ENCODE measurements at regions of chr3 and their contacts with region 1.

Region 1: GRCh38 chr3:111781561-111782446 is 77.3 kb upstream of the PHLDB2 start:
- DNase-seq: no peak
- H3K4me3 ChIP-seq: no peak overlapping the region
- H3K27ac ChIP-seq: peak overlapping the region; percentile 68 to 75
- H3K4me1 ChIP-seq: peaks cover 0 to 32% of the 10 kb centered on the region in 2 donors
- H3K27me3 ChIP-seq: no peaks in the 10 kb centered on the region
- CTCF ChIP-seq: no peak

Region 2: DNA sequence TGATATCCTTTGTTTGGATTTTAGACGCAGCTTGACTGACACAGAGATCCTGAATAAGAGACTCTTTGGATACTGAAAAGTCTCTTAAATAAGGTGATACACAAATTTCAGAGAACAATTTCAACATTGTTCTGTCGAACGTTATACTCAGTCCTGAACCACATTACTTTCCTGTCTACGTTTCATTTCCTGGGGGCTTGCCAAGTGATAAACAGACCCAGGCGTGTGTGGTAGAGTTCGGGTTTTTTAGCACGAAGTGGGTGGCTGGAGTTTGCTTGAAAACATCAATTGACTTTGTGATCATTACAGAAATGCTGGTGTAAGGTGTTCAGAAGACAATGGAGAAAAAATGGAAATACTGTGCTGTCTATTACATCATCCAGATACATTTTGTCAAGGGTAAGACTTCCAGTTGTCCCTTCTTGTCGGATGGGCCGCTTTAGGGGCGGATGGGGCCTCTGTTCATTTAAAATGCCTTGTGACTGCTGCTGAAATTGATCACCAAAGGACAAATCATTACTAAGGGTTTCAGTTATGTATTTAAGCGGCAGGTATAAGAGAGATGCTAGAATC is 239.8 kb before region 1 on chr3 and contains the start of gene CD96:
- intact Hi-C with region 1: no loop called
- DNase-seq: peak in 1 of 2 donors; percentile 62
- H3K4me3 ChIP-seq: no peak within 1 kb of the TSS
- H3K27ac ChIP-seq: no peak within 1 kb of the TSS
- H3K4me1 ChIP-seq: no peaks in the 10 kb centered on the region
- H3K27me3 ChIP-seq: no peaks in the 10 kb centered on the region
- CTCF ChIP-seq: no peak
- total RNA-seq, gene CD96: 0.32 TPM

Region 3: GRCh38 chr3:111747490-111747889 is 34.3 kb before region 1 on chr3:
- intact Hi-C with region 1: no loop called
- DNase-seq: no peak
- H3K4me3 ChIP-seq: no peak overlapping the region
- H3K27ac ChIP-seq: no peak overlapping the region
- H3K4me1 ChIP-seq: peaks cover 0 to 9% of the 10 kb centered on the region in 2 donors
- H3K27me3 ChIP-seq: no peaks in the 10 kb centered on the region
- CTCF ChIP-seq: no peak

Region 4: DNA sequence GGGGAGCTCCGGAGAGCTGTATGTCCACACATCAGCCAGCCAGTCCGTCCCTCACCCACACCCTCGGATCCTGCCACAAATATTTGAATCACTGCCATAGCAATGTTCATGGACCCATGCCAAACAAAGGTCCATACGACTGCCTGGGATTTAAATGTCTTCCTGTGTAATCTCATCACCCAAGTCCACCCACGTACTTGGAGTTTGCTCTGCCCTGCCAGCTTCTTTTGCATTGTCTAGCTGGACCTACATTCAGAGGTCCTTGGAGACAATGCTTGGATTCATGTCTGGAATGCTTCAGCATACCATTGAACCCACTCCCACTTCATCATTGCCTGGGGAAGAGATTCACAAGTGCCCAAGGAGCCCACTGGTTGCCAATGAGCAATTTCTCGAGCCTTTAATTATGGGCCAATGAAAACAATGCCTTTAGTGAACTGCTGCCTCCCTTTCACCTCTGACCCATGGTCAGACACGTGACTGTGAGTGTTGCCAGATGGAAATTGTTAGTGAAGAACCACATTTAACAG is 13.2 kb before region 1 on chr3:
- intact Hi-C with region 1: loop called (anchors 2 kb)
- DNase-seq: no peak
- H3K4me3 ChIP-seq: no peak overlapping the region
- H3K27ac ChIP-seq: peak overlapping the region; percentile 65
- H3K4me1 ChIP-seq: peaks cover 8 to 37% of the 10 kb centered on the region in 2 donors
- H3K27me3 ChIP-seq: no peaks in the 10 kb centered on the region
- CTCF ChIP-seq: no peak